Right ventricle myocardium inferior (tissue), 1 donor: ENCODE measurements at regions of chr15 and their contacts with region 1.

Region 1: DNA sequence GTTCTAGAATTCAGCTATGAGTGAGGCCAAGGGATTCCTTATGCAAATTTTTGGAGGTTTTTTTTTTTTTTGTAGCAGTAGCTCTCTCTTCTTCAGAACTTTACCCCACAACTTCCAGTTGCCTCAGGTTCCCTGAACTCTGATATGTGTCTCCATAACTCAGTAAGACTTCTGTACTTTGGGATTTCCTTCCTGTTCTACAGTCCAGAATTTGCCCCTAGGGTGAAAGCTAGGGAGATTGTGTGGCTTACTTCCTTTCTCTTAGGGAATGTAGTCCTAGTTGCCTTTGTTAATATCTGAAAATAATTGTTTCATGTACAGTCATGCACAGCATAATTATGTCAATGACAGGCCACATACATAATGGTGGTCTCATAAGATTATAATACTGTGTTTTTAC is 30.8 kb downstream of the LRRC28 start:
- DNase-seq: no peak
- ATAC-seq: no peak

Region 2: DNA sequence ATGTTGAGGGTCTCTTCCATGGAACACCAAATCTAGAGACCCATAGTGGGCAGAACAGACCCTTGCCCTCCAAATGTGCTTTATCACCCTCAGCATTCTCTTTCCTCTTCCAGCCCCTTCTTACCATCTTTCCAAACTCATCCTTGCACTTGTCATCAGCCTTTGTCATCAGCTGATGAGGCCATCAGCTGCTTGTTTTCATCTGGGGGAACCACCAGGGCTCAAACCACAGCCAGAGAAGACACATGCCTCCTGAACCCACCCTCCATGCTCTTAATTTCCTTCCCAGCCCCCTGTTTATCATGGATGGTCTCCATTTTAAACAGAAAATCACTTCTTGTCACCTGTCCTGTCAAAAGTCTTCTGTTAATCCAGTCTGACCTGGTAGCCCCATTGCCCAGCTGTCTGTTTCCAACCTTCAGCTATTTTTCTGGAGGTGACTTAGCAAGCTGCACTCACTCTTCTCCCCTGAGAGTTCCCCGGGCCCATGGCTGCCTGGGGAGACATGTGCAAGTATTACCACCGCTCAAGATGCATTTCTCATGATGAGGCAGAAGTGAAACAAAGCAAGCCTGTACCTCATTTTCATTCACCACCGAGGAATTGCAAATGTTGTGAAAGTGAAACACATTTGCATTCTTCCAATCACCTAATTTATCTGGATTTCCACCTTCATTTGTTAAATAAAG is 192.0 kb before region 1 on chr15:
- intact Hi-C with region 1: no loop called
- DNase-seq: no peak
- ATAC-seq: no peak

Region 3: GRCh38 chr15:99361541-99362185 is 79.5 kb after region 1 on chr15:
- intact Hi-C with region 1: loop called (anchors 5 kb)
- DNase-seq: no peak
- ATAC-seq: no peak

Region 4: GRCh38 chr15:99409097-99409473 is 127.0 kb after region 1 on chr15:
- intact Hi-C with region 1: loop called (anchors 5 kb)
- DNase-seq: no peak
- ATAC-seq: peak; percentile 86

Region 5: DNA sequence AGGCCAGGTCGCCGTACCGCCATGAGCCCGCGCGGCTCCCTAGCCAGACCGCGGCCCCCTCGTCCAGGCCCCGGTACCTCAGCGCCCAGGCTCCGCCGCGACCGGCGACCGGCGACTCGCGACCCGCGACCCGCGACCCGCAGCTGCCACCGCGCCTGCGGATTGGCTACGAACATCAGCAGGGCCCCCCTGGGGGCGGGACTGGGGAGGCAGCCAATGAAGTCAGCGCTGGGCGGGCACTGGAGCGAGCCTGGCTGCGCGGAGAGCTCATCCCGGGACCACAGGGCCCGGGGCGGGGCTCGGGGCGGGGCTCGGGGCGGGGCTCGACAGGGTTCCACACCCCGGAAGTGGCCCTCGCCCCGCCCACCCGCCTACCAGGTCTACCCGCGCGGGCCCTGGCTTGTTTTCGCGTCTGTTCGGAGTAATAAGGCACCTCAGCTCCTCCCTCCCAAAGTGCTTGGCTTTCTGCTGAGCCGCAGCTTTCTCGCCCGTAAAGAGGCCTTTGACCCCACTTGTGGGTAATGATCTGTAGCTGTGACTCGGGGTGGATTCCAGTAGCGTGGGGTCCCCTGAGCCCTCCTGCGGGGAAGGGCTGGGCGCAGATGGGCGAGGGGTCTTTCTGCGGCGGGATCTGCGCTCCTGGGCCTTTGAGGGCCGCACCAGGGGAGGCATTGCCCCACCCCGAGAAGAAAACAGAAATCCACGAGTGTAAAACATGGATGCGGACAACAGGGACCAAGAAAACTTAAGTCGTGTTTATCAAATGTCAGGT is 451.3 kb after region 1 on chr15 and contains the start of gene LYSMD4:
- intact Hi-C with region 1: loop called (anchors 5 kb)
- DNase-seq: peak; percentile 99
- ATAC-seq: peak; percentile 99
- total RNA-seq, gene LYSMD4: 9.3 TPM